Breast epithelium (tissue), 4 donors: ENCODE measurements at regions of chr3 and their contacts with region 1.

Region 1: GRCh38 chr3:10532939-10533736 is 27.8 kb upstream of the ATP2B2 start:
- DNase-seq: peak in 1 of 2 donors; percentile 31
- H3K4me3 ChIP-seq: no peak overlapping the region
- H3K27ac ChIP-seq: no peak overlapping the region
- H3K4me1 ChIP-seq: no peaks in the 10 kb centered on the region
- H3K27me3 ChIP-seq: no peaks in the 10 kb centered on the region
- CTCF ChIP-seq: no peak
- POLR2A ChIP-seq: no peak

Region 2: DNA sequence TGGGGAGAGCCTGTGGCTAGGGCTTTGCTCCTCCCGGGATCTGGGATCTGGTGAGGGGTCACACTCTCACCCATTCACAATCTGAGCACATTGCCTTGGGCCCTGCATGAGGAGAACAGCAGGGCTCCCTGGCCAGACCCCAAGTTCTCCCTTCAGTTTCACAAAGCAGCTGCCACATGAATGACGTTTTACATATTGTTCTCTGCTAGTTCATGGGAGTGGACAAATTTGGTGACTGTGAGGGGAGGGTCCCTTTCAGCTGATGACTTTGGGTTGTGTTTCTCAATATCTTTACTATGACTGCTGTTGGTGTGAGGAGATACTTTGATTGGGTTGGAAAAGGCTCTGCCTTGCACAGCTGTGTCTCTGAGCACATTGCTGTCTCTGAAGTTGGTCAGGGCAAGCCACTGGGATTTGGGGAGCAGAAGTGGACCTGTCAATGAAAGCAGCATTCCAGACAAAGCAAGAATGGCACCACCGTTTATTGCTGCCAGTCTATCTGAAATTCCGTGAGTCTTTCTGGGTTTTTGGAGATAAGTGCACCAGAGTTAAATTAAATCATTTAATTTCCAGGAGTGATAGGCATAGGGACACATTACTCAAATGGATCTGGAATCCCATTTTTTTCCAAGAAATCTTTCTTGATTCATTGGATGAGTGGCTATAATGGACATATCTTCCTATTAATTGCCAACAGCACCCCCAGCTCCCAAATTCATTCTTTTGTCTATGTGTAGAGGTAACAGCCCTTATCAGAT is 1615.2 kb after region 1 on chr3:
- intact Hi-C with region 1: loop called (anchors 5 kb)
- DNase-seq: no peak
- H3K4me3 ChIP-seq: peak overlapping the region in 1 of 3 donors; percentile 25
- H3K27ac ChIP-seq: peak overlapping the region in 1 of 2 donors; percentile 69
- H3K4me1 ChIP-seq: peaks cover 0 to 8% of the 10 kb centered on the region in 2 donors
- H3K27me3 ChIP-seq: no peaks in the 10 kb centered on the region
- CTCF ChIP-seq: no peak
- POLR2A ChIP-seq: no peak